BJ (cell line): ENCODE measurements at regions of chr6 and their contacts with region 1.

Region 1: GRCh38 chr6:122789182-122790027 is at the start of gene SMPDL3A:
- DNase-seq: peak; percentile 16
- H3K4me3 ChIP-seq: peak within 1 kb of the TSS; percentile 80
- H3K27me3 ChIP-seq: no peaks in the 10 kb centered on the region; the same call in 1 of the 2 replicates
- CTCF ChIP-seq: peak; percentile 50
- polyA plus RNA-seq, gene SMPDL3A: 6.4 and 10.4 TPM in 2 replicates

Region 2: GRCh38 chr6:122806291-122806690 is 16.9 kb after region 1 on chr6:
- CTCF ChIA-PET with region 1: interaction called, 26 read pairs
- POLR2A ChIA-PET with region 1: interaction called, 12 read pairs
- DNase-seq: no peak
- H3K4me3 ChIP-seq: no peak overlapping the region
- H3K27me3 ChIP-seq: no peaks in the 10 kb centered on the region
- CTCF ChIP-seq: no peak

Region 3: GRCh38 chr6:122817766-122818165 is 28.4 kb after region 1 on chr6:
- CTCF ChIA-PET with region 1: interaction called, 12 read pairs
- POLR2A ChIA-PET with region 1: no interaction called
- DNase-seq: no peak
- H3K4me3 ChIP-seq: no peak overlapping the region
- H3K27me3 ChIP-seq: no peaks in the 10 kb centered on the region
- CTCF ChIP-seq: no peak

Region 4: DNA sequence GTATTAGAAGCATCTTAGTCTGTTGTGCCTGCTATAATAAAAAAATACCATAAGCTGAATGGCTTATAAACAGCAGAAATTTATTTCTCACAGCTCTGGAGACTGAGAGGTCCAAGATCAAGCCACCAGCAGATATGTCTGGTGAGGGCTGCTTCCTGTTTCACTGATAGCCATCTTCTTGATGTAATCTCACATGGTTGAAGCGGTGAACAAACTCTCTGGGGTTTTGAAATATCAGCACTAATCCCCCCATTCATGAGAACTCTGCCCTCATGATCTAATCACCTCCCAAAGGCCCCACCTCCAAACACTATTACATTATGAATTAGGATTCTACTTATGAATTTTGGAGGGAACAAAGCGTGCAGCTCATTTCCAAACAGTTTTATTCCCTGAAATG is 195.0 kb after region 1 on chr6:
- CTCF ChIA-PET with region 1: no interaction called
- POLR2A ChIA-PET with region 1: no interaction called
- DNase-seq: no peak
- H3K4me3 ChIP-seq: no peak overlapping the region
- H3K27me3 ChIP-seq: no peaks in the 10 kb centered on the region
- CTCF ChIP-seq: no peak